Activated CD4-positive, alpha-beta memory T cell treated with anti-CD3 and anti-CD28 coated beads for 36 hours (primary cell): ENCODE measurements at regions of chr6 and their contacts with region 1.

Region 1: GRCh38 chr6:130697995-130698535 is 129.1 kb upstream of the SMLR1 start:
- DNase-seq: peak; percentile 74
- H3K4me3 Mint-ChIP-seq: no peak overlapping the region
- H3K27ac Mint-ChIP-seq: no peak overlapping the region
- H3K4me1 Mint-ChIP-seq: peaks cover 22% of the 10 kb centered on the region
- H3K27me3 Mint-ChIP-seq: no peaks in the 10 kb centered on the region

Region 2: DNA sequence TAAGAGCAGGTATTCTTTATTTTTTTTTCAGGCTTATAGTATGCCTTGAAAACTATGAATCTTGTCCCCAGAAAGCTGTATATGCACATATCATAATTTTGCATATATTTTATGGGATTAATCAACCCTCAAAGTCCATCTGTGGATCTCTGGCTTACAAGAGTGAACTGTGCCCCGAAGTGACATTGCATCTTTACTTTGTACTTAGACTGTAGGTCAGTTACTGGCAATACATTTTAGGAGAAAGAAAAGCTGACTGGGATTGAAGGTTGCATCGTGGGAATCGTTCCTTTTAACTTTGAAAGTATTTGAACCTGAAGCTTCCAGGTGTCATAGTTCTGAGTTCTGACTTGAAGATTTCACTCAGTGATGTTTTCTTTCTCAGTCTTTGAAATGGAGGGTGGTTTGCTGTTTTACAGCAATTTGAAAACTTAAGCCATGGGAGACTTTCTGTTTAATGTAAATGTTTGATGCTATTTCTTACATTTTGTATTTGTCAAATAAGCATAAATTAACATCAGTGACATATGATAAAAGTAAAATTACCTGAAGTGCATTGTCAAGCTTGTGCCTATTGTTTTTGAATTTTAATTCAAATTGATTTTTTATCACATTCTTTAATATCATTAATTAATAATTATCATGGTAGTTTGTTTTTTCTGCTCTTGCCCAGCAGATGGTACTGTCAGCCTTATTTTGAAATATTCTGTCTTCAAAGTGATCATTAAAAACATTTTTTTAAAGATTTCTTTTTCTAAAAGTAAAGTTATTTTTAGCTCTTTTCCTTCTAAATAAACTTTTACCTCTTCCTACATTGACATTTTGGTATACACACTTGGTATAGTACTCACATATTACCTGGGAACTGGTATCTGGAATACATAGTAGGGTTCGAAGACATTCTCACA is 650.7 kb before region 1 on chr6:
- CTCF ChIA-PET with region 1: no interaction called
- POLR2A ChIA-PET with region 1: no interaction called
- intact Hi-C with region 1: loop called (anchors 5 kb)
- DNase-seq: no peak
- H3K4me3 Mint-ChIP-seq: no peak overlapping the region
- H3K27ac Mint-ChIP-seq: no peak overlapping the region
- H3K4me1 Mint-ChIP-seq: no peaks in the 10 kb centered on the region
- H3K27me3 Mint-ChIP-seq: no peaks in the 10 kb centered on the region

Region 3: GRCh38 chr6:130322673-130323268 is 375.3 kb before region 1 on chr6:
- CTCF ChIA-PET with region 1: interaction called, 121 read pairs
- POLR2A ChIA-PET with region 1: no interaction called
- intact Hi-C with region 1: loop called (anchors 1 kb)
- DNase-seq: peak; percentile 59
- H3K4me3 Mint-ChIP-seq: no peak overlapping the region
- H3K27ac Mint-ChIP-seq: no peak overlapping the region
- H3K4me1 Mint-ChIP-seq: peaks cover 4% of the 10 kb centered on the region
- H3K27me3 Mint-ChIP-seq: no peaks in the 10 kb centered on the region

Region 4: GRCh38 chr6:130513770-130514169 is 184.3 kb before region 1 on chr6:
- CTCF ChIA-PET with region 1: no interaction called
- POLR2A ChIA-PET with region 1: no interaction called
- intact Hi-C with region 1: loop called (anchors 5 kb)
- DNase-seq: peak; percentile 68
- H3K4me3 Mint-ChIP-seq: no peak overlapping the region
- H3K27ac Mint-ChIP-seq: peak overlapping the region; percentile 81
- H3K4me1 Mint-ChIP-seq: peaks cover 65% of the 10 kb centered on the region
- H3K27me3 Mint-ChIP-seq: no peaks in the 10 kb centered on the region

Region 5: GRCh38 chr6:130708338-130708737 is 10.3 kb after region 1 on chr6:
- CTCF ChIA-PET with region 1: interaction called, 12 read pairs
- POLR2A ChIA-PET with region 1: no interaction called
- intact Hi-C with region 1: no loop called
- DNase-seq: peak; percentile 14
- H3K4me3 Mint-ChIP-seq: no peak overlapping the region
- H3K27ac Mint-ChIP-seq: no peak overlapping the region
- H3K4me1 Mint-ChIP-seq: peaks cover 10% of the 10 kb centered on the region
- H3K27me3 Mint-ChIP-seq: peaks cover 1% of the 10 kb centered on the region

Region 6: DNA sequence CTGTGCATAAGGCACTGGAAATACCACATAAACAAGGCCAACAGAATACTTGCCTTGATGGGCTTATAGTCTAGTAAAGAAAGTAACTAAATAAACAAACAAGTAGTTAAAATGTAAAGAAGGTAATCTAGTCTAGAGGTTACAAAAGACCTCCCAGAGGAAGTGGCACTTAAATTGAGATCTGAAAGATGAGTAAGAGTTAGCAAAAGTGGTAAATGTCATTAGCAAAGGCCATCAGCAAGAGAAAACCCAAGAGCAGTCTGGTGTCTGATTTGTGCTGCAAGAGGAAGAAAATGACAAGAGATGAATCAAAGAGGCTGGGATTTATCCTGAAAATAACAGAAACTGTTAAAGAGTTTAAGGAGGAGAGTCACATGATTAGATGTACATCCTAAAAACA is 32.5 kb after region 1 on chr6:
- CTCF ChIA-PET with region 1: no interaction called
- POLR2A ChIA-PET with region 1: no interaction called
- intact Hi-C with region 1: no loop called
- DNase-seq: no peak
- H3K4me3 Mint-ChIP-seq: no peak overlapping the region
- H3K27ac Mint-ChIP-seq: no peak overlapping the region
- H3K4me1 Mint-ChIP-seq: no peaks in the 10 kb centered on the region
- H3K27me3 Mint-ChIP-seq: no peaks in the 10 kb centered on the region

Region 7: GRCh38 chr6:131135244-131136020 is 437.4 kb after region 1 on chr6 and contains the start of gene AKAP7:
- CTCF ChIA-PET with region 1: no interaction called
- POLR2A ChIA-PET with region 1: no interaction called
- intact Hi-C with region 1: no loop called
- DNase-seq: peak; percentile 72
- H3K4me3 Mint-ChIP-seq: peak within 1 kb of the TSS; percentile 79
- H3K27ac Mint-ChIP-seq: peak within 1 kb of the TSS; percentile 83
- H3K4me1 Mint-ChIP-seq: peaks cover 14% of the 10 kb centered on the region
- H3K27me3 Mint-ChIP-seq: peaks cover 2% of the 10 kb centered on the region
- total RNA-seq, gene AKAP7: 4.0 to 4.3 TPM

Region 8: GRCh38 chr6:132270726-132271402 is 1572.8 kb after region 1 on chr6:
- CTCF ChIA-PET with region 1: no interaction called
- POLR2A ChIA-PET with region 1: no interaction called
- intact Hi-C with region 1: no loop called
- DNase-seq: no peak
- H3K4me3 Mint-ChIP-seq: no peak overlapping the region
- H3K27ac Mint-ChIP-seq: no peak overlapping the region
- H3K4me1 Mint-ChIP-seq: no peaks in the 10 kb centered on the region
- H3K27me3 Mint-ChIP-seq: peaks cover 10% of the 10 kb centered on the region